ENCODE measurements at regions of chr18 and their contacts with region 1.

Region 1: DNA sequence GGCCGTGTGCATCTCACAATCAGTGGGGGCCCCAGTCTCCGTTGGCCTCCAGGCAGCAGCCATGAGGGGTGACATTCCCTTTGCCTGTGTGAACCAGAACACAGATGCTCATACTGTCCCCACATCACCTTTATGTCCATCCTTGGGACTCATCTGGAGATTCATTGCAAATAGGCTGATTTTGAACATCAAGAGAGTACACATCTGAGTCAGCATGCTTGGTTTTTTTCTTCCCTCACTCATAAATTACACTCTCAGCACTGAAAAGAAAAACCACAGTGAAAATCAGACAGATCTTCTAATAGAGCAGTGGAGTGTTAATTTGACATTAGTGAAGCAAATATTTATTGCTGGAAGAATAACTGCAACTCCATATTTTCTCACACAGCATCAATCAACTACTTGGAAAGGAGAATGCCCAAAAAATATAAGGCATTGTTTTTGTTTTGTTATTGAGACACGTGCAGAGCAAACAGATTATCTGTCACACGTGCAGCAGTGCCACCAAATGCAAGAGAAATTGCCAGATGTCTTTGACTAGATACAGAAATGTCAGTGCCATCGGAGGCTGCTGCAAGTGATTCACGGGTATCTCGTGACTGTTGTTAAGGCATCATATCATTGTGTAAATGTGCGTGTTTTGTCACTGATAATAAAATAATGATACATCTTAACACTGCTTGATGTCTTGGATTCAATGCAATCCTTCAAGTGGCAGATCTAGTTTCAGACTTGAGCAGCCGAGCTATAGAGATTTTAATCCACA is 10.9 kb downstream of the APCDD1 start:
- DNase-seq: no peak
- ATAC-seq: no peak
- H3K4me3 Mint-ChIP-seq: no peak overlapping the region
- H3K27ac Mint-ChIP-seq: no peak overlapping the region
- H3K4me1 Mint-ChIP-seq: peaks cover 2% of the 10 kb centered on the region
- H3K27me3 Mint-ChIP-seq: peaks cover 7% of the 10 kb centered on the region
- CTCF ChIP-seq: no peak

Region 2: DNA sequence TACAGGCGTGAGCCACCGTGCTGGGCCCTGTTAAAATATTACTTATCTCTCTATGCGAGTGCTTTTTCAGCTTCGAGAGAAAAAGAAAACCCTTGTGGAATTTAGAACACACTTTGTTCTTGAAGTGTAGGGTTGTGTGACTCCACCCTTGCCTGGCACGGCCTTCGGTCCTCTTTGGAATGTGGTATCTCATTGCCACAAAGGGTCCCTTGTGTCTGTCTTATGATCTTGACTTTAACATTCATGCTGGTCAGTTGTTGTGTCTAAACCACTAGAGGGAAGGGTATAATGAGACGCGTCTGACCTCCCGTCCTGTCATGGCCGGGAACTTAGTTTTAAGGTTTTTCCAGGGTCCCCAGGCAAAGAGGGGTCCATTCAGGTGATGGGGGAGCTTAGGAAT is 305.1 kb before region 1 on chr18:
- CTCF ChIA-PET with region 1: no interaction called
- POLR2A ChIA-PET with region 1: no interaction called
- intact Hi-C with region 1: no loop called
- DNase-seq: no peak
- ATAC-seq: no peak
- H3K4me3 Mint-ChIP-seq: no peak overlapping the region
- H3K27ac Mint-ChIP-seq: no peak overlapping the region
- H3K4me1 Mint-ChIP-seq: no peaks in the 10 kb centered on the region
- H3K27me3 Mint-ChIP-seq: no peaks in the 10 kb centered on the region
- CTCF ChIP-seq: no peak

Region 3: DNA sequence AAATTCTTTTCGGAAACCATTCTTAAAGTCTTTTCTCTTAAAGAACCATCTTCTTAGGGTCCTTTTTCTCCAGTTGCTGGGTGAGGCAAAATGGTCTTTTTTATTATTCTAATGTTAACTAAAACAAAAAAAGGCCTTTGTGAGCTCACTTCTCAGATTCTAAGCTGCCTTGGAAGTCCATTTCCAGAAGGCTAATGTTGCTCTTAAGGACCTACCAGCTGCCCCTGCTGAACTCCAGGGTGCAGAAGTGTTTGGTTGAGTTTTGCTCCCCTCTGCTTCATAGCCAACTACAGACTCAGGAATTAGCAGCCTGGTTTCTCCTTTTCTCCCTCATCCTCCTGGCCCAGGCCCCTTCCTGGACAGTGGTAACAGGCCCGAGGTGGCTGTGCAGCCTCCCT is 12.5 kb after region 1 on chr18:
- CTCF ChIA-PET with region 1: no interaction called
- POLR2A ChIA-PET with region 1: no interaction called
- intact Hi-C with region 1: loop called (anchors 1 kb)
- DNase-seq: no peak
- ATAC-seq: no peak
- H3K4me3 Mint-ChIP-seq: no peak overlapping the region
- H3K27ac Mint-ChIP-seq: no peak overlapping the region
- H3K4me1 Mint-ChIP-seq: peaks cover 67% of the 10 kb centered on the region
- H3K27me3 Mint-ChIP-seq: peaks cover 2% of the 10 kb centered on the region
- CTCF ChIP-seq: no peak

Measured in activated B cell treated with CpG ODN at 0.5 μM for 24 hours (primary cell).